ENCODE measurements at regions of chr19 and their contacts with region 1.

Region 1: DNA sequence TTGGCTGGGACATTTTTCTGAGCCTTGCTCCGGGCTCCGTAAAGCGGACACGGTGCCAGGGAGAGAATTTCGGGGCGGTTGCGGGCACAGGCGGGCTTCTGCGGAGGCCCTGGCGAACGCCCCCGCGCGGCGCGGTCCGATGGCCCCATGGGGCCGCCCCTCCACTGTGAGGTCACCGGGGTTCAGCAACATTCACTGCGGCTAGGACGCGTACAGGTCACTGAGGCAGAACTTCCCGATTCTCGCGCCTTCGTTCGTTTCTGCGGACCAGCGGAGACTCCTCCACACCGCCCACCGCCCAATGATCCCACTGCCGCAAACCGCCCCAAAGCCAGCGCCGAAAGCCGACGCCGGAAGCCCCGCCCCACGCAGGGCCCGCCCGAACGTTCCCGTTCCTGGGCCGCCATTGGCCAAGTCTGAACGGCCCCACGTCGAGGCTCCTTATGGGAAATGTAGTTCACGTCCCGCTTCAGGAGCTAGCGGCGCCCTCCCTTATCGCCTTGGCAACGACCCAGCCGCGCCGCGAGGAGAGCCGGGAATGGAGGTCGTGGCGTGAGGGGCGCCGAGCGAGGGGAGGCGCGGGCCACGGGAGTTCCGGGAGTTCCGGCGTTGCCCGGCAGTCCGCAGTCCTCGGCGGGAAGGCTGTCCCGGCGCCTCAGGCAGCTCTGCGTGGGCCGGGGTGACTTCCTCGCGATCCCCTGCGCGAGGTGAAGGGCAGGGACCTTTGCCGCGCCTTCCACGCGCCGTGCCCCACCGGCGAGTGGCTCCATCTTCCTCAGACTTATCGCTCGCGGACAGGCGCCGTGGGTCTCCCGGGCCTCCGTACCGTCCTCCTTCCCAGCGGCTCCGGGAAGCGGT is at the start of gene ZNF584:
- DNase-seq: peak; percentile 89
- ATAC-seq: peak; percentile 90
- H3K4me3 ChIP-seq: peak within 1 kb of the TSS; percentile 89 to 98 (median 95)
- H3K27ac ChIP-seq: peak within 1 kb of the TSS; percentile 85
- H3K4me1 ChIP-seq: peaks cover 32% of the 10 kb centered on the region
- H3K27me3 ChIP-seq: no peaks in the 10 kb centered on the region; a peak in 1 of 5 replicates
- CTCF ChIP-seq: peak; percentile 47
- EP300 ChIP-seq: no peak
- POLR2A ChIP-seq: peak; percentile 89 to 96
- RAD21 ChIP-seq: peak; percentile 36; the same call in 1 of the 2 replicates
- total RNA-seq, gene ZNF584: 6.8 and 7.0 TPM in 2 replicates

Region 2: DNA sequence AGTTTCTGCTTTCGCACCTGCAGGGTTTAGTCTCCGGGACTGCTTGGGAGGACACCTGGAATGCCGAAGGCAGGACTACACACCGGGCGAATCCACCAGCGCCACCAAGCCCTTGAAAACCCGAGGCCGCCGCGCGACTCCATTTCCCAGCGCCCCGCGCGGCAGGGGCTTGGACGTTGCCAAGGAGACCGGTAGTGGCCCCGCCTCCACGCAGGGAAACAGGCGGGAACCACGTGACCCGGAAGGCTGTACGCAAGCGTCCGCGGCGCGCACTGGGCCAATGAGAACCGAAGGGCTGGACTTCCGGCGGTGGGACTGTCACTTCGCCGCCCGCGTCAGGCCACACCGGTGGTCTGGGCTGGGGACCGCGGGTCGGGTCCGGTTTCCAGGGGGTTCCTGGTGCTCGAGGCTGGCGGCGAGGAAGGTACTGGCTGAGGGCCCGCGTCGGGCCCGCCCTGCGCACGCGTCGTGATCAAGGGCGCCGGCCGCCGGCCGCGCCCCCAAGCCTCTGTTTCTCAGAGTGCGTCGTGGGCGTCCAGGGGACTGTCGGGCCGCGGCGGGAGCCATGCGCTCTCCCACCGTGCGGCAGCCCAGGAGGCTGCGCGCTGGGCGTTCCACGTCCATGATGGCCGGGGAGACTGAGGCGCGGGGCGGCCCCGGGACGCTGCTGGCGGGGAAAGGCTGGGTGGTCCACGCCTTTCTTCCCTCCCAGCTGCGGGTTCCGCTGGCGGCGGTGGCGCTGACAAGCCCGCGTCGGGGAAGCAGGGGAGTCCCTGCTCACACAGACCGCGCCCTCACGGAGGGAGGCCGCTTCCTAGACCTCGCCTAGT is 58.6 kb after region 1 on chr19 and contains the start of gene ZNF324:
- CTCF ChIA-PET with region 1: no interaction called
- POLR2A ChIA-PET with region 1: interaction called, 3 read pairs
- in situ Hi-C with region 1: no loop called
- intact Hi-C with region 1: loop called (anchors 5 kb)
- DNase-seq: peak; percentile 94
- ATAC-seq: peak; percentile 89
- H3K4me3 ChIP-seq: peak within 1 kb of the TSS; percentile 71 to 93 (median 86)
- H3K27ac ChIP-seq: peak within 1 kb of the TSS; percentile 51
- H3K4me1 ChIP-seq: peaks cover 24% of the 10 kb centered on the region
- H3K27me3 ChIP-seq: no peaks in the 10 kb centered on the region
- CTCF ChIP-seq: peak; percentile 62
- EP300 ChIP-seq: no peak
- POLR2A ChIP-seq: peak; percentile 64 to 74
- RAD21 ChIP-seq: no peak
- total RNA-seq, gene ZNF324: 4.0 and 4.7 TPM in 2 replicates